ENCODE measurements at regions of chr3 and their contacts with region 1.

Region 1: GRCh38 chr3:48439820-48440589 is at the starts of genes CCDC51 and TMA7:
- DNase-seq: peak; percentile 98
- H3K4me3 ChIP-seq: peak within 1 kb of the TSS; percentile 79 to 86
- H3K27ac ChIP-seq: peak within 1 kb of the TSS; percentile 64 to 86
- H3K4me1 ChIP-seq: peaks cover 8 to 20% of the 10 kb centered on the region in 2 experiments
- H3K27me3 ChIP-seq: no peaks in the 10 kb centered on the region
- CTCF ChIP-seq: no peak
- EP300 ChIP-seq: 0 out of 4 replicates have a peak, but pooled peaks of 1 of the 2 experiments have one; percentile 20
- RAD21 ChIP-seq: no peak
- polyA plus RNA-seq, gene CCDC51: 24.2 and 29.6 TPM in 2 replicates
- polyA plus RNA-seq, gene TMA7: 393 and 438 TPM in 2 replicates

Region 2: DNA sequence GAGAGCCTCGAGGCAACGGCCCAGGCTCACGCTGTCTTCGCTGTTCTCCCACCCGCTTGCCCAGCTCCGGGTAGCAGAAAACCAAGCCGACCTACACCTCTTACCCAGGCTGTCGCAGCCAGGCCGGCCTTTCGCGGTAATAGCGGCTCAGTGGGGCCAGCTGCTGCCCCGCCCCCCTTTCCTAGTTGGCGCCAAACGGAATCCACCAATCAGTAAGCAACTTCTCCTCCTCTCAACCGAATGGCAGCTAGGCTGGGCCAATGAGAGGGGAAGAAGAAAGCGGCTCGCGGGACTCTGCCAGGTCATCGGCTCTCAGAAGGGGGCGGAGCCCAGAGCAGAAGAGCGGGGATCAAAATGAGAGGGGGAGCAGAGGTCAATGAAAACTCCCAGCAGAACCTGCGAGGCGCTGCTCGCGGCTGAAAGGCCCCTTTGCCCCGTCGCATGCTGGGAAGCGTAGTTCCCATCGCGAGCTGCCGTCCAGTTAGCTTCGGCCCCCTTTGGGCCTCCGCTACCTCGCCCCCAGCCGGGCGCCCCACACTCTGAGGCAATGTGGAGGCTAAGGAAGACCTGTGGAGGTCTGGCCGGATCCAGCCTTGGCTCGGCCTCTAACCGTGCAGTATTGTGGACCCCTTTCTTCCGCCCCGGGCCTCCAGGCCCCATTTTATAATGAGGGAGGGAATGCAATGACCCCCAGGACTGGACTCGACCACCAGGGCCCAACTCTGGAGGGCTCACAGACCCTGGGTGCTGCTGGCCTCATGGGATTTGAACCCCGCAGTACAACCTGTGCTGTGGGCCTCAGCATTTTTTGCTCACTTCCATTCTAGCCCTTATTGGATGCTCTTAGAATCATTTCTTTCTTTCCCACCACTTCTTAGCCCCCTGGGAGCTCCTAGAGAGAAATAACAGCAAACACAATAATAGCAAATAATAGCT is 251.5 kb before region 1 on chr3 and contains the start of gene CDC25A:
- CTCF ChIA-PET with region 1: interaction called, 93 read pairs
- POLR2A ChIA-PET with region 1: interaction called, 4 read pairs
- DNase-seq: peak; percentile 96
- H3K4me3 ChIP-seq: peak within 1 kb of the TSS; percentile 75 to 91
- H3K27ac ChIP-seq: peak within 1 kb of the TSS; percentile 63 to 73
- H3K4me1 ChIP-seq: peaks cover 0 to 12% of the 10 kb centered on the region in 2 experiments; a peak in 1 of 4 replicates
- H3K27me3 ChIP-seq: no peaks in the 10 kb centered on the region
- CTCF ChIP-seq: no peak
- EP300 ChIP-seq: no peak; a peak in 1 of 4 replicates
- RAD21 ChIP-seq: no peak
- polyA plus RNA-seq, gene CDC25A: 3.3 and 3.8 TPM in 2 replicates

Region 3: DNA sequence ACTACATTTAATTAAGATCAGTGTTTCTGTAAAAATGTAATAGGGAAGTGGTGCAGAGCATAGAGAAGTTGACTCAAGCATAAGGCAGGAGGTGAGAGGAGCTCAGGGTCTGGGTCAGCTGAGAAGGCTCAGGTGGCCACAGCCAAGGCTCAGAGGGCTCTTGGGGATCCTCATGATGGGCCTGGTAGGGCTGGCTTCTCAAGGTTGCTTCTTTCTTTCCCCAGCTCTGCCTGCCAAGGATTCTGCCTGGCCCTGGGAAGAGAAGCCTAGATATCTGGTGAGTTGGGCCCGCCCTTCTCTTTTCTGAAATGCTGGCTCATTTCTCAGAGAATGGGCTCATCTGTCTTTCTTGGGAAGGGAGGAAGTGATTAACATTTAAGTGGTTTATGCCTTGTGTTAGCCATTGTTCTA is 192.6 kb before region 1 on chr3:
- CTCF ChIA-PET with region 1: interaction called, 70 read pairs
- POLR2A ChIA-PET with region 1: no interaction called
- DNase-seq: no peak
- H3K4me3 ChIP-seq: no peak overlapping the region
- H3K27ac ChIP-seq: peak overlapping the region in 1 of 2 experiments; percentile 68; a peak in 2 of 4 replicates
- H3K4me1 ChIP-seq: peaks cover 2 to 18% of the 10 kb centered on the region in 2 experiments; a peak in 3 of 4 replicates
- H3K27me3 ChIP-seq: no peaks in the 10 kb centered on the region
- CTCF ChIP-seq: no peak
- EP300 ChIP-seq: no peak
- RAD21 ChIP-seq: no peak

Region 4: GRCh38 chr3:48294611-48295263 is 145.3 kb before region 1 on chr3:
- CTCF ChIA-PET with region 1: interaction called, 29 read pairs
- POLR2A ChIA-PET with region 1: no interaction called
- DNase-seq: no peak
- H3K4me3 ChIP-seq: no peak overlapping the region
- H3K27ac ChIP-seq: no peak overlapping the region
- H3K4me1 ChIP-seq: no peaks in the 10 kb centered on the region
- H3K27me3 ChIP-seq: no peaks in the 10 kb centered on the region
- CTCF ChIP-seq: no peak
- EP300 ChIP-seq: no peak
- RAD21 ChIP-seq: no peak

Region 5: GRCh38 chr3:48347500-48347899 is 92.5 kb before region 1 on chr3:
- CTCF ChIA-PET with region 1: interaction called, 31 read pairs
- POLR2A ChIA-PET with region 1: no interaction called
- DNase-seq: peak; percentile 62
- H3K4me3 ChIP-seq: no peak overlapping the region
- H3K27ac ChIP-seq: peak overlapping the region in 1 of 2 experiments; percentile 81; a peak in 2 of 4 replicates
- H3K4me1 ChIP-seq: peaks cover 0 to 47% of the 10 kb centered on the region in 2 experiments; a peak in 2 of 4 replicates
- H3K27me3 ChIP-seq: no peaks in the 10 kb centered on the region
- CTCF ChIP-seq: no peak
- EP300 ChIP-seq: peak in 1 of 2 experiments; percentile 96; a peak in 2 of 4 replicates
- RAD21 ChIP-seq: peak; percentile 32

Region 6: DNA sequence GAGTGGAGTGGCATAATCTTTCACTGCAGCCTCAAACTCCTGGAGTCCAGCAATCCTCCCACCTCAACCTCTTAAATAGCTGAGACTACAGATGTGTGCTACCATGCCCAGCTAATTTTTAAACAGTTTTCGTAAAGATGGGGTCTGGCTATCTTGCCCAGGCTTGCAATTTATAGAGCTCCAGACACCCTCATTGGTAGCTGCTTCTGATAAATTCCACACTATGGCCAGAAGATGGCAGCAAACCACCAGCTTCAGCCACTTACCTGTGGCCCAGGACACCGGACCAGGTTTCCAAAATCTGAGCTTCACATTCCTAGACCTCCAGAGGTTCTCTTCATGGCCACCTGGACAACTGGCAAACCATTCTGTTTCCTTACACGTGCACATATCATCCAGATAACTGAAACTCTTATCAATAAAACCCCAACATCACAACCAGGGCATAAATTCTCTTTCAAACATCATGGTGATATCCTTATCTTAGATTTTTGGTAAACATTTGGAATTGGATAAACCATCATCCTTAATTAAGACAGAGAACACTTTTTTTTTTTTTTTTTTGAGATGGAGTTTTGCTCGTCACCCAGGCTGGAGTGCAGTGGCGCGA is 39.1 kb before region 1 on chr3:
- CTCF ChIA-PET with region 1: interaction called, 399 read pairs
- POLR2A ChIA-PET with region 1: interaction called, 8 read pairs
- DNase-seq: peak; percentile 81
- H3K4me3 ChIP-seq: no peak overlapping the region
- H3K27ac ChIP-seq: no peak overlapping the region; a peak in 1 of 4 replicates
- H3K4me1 ChIP-seq: peaks cover 6 to 23% of the 10 kb centered on the region in 2 experiments; a peak in 2 of 4 replicates
- H3K27me3 ChIP-seq: no peaks in the 10 kb centered on the region
- CTCF ChIP-seq: peak; percentile 82
- EP300 ChIP-seq: no peak
- RAD21 ChIP-seq: peak; percentile 86

Region 7: DNA sequence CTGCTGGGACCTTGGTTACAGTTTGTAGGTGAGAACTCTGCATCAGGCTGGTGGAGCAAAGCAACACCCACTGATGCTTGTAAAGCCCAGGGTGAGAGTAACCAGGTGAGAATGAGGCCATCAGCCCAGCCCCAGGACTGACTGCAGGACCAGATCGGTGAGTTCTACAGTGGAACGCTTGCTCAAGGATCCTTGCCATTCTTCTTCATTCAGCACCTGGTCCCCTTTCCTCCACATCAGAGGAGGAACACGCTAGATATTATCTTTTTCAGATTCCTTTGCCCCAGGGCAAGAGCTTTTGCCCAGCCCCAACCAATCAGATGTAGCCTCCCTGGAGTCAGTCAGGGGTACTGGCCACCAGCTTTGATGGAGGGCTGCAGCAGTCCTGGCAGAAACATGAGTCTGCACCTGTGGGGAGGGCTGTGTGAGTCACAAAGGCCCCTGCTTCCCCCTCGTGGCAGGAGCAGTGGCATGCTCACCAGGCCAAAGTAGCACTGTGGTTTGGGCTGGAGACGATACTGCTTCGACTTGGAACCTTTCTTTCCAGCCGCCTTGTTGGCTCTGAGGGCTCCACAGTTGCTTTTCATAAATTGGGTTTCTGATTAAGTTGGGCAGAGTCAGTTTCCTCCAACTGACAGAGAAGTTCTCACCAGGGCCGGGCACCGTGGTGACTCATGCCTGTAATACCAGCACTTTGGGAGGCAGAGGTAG is 67.5 kb after region 1 on chr3:
- CTCF ChIA-PET with region 1: interaction called, 13 read pairs
- POLR2A ChIA-PET with region 1: no interaction called
- DNase-seq: peak; percentile 86
- H3K4me3 ChIP-seq: 0 out of 4 replicates have a peak overlapping the region, but pooled peaks of 1 of the 2 experiments have one; percentile 1
- H3K27ac ChIP-seq: peak overlapping the region; percentile 29 to 58
- H3K4me1 ChIP-seq: peaks cover 14 to 30% of the 10 kb centered on the region in 2 experiments; a peak in 2 of 4 replicates
- H3K27me3 ChIP-seq: no peaks in the 10 kb centered on the region
- CTCF ChIP-seq: peak; percentile 58
- EP300 ChIP-seq: peak in 1 of 2 experiments; percentile 25; a peak in 1 of 4 replicates
- RAD21 ChIP-seq: peak; percentile 89